Psoas muscle (tissue), 8 donors: ENCODE measurements at regions of chr5 and their contacts with region 1.

Region 1: DNA sequence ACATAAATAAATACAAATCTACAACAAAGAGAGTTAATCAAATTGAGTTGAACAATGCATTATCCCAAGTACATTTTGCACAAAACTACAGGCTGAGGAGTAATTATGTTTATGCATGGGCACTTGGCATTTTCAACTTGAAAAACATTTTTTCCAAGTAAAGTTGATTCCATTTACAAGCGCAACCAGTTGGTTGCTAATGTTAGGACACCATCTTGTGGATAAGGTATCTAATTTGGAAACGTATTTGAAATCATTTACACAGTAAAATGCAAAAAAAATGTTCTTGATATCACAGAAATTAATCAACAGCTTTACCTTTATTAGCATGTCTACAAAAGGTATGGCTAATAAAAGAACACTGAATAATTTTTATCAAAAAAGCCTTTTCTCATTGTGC is 18.8 kb downstream of the FTMT start:
- DNase-seq: no peak
- ATAC-seq: no peak
- H3K4me3 ChIP-seq: no peak overlapping the region
- H3K27ac ChIP-seq: no peak overlapping the region
- H3K4me1 ChIP-seq: peaks cover 5% of the 10 kb centered on the region
- H3K27me3 ChIP-seq: no peaks in the 10 kb centered on the region
- CTCF ChIP-seq: peak; percentile 33

Region 2: GRCh38 chr5:121630402-121630801 is 240.1 kb before region 1 on chr5:
- intact Hi-C with region 1: loop called (anchors 5 to 10 kb)
- DNase-seq: no peak
- ATAC-seq: peak; percentile 55 to 88 (median 70)
- H3K4me3 ChIP-seq: no peak overlapping the region
- H3K27ac ChIP-seq: no peak overlapping the region
- H3K4me1 ChIP-seq: no peaks in the 10 kb centered on the region
- H3K27me3 ChIP-seq: no peaks in the 10 kb centered on the region
- CTCF ChIP-seq: peak; percentile 32

Region 3: DNA sequence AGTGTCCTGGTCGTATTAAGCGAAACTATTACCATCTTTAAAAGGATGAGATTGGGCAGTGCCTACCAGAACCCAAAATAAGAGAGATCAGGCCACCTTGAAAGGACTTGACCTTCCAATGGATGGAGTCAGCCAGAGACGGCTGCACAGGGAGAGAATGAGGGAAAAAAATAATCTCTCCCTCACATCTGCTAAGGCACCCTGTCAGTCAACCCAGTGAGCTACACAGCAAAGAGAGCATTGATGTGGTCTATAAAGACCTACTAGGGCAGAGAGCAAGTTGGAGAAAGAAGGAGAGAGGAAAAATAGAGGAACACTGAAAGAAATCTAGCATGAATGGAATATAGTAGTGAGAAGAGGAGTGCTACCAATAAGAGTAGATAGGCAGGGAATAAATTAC is 86.8 kb before region 1 on chr5:
- intact Hi-C with region 1: no loop called
- DNase-seq: no peak
- ATAC-seq: no peak
- H3K4me3 ChIP-seq: no peak overlapping the region
- H3K27ac ChIP-seq: no peak overlapping the region
- H3K4me1 ChIP-seq: no peaks in the 10 kb centered on the region
- H3K27me3 ChIP-seq: no peaks in the 10 kb centered on the region
- CTCF ChIP-seq: no peak

Region 4: DNA sequence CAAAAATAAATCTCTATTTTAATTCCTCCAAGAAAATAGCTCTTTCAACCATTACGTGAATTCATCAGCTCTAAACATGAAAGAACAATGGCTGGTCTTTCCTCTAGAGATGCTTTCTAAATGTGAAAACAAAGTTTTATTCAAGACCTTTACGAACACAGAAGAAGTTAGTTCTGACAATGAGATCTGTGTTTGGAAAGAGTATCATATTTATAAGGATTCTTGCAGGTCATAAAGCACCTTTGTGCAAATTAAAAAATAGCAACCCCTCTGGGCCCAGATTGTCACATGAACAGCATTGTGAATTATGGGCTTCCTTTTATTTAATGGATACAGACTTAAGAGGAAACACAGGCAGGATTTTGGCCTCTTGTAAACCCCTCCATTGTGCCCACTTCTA is 36.5 kb before region 1 on chr5:
- intact Hi-C with region 1: no loop called
- DNase-seq: no peak
- ATAC-seq: no peak
- H3K4me3 ChIP-seq: no peak overlapping the region
- H3K27ac ChIP-seq: no peak overlapping the region
- H3K4me1 ChIP-seq: no peaks in the 10 kb centered on the region
- H3K27me3 ChIP-seq: no peaks in the 10 kb centered on the region
- CTCF ChIP-seq: no peak

Region 5: GRCh38 chr5:122653087-122653959 is 782.8 kb after region 1 on chr5:
- intact Hi-C with region 1: no loop called
- DNase-seq: no peak
- ATAC-seq: no peak
- H3K4me3 ChIP-seq: no peak overlapping the region
- H3K27ac ChIP-seq: no peak overlapping the region
- H3K4me1 ChIP-seq: no peaks in the 10 kb centered on the region
- H3K27me3 ChIP-seq: no peaks in the 10 kb centered on the region
- CTCF ChIP-seq: no peak